ENCODE measurements at regions of chr11 and their contacts with region 1.

Region 1: GRCh38 chr11:1652771-1653540 is 23.4 kb downstream of the KRTAP5-5 start:
- DNase-seq: peak; percentile 44
- H3K4me3 ChIP-seq: no peak overlapping the region
- H3K27ac ChIP-seq: no peak overlapping the region
- H3K4me1 ChIP-seq: peaks cover 2% of the 10 kb centered on the region
- H3K27me3 ChIP-seq: peaks cover 0 to 4% of the 10 kb centered on the region in 2 experiments
- CTCF ChIP-seq: peak; percentile 93
- POLR2A ChIP-seq: no peak

Region 2: GRCh38 chr11:1572197-1573076 is 80.5 kb before region 1 on chr11 and contains the start of gene DUSP8:
- CTCF ChIA-PET with region 1: interaction called, 10 read pairs
- POLR2A ChIA-PET with region 1: no interaction called
- dilution Hi-C with region 1: no loop called
- intact Hi-C with region 1: no loop called
- DNase-seq: peak; percentile 80
- H3K4me3 ChIP-seq: peak within 1 kb of the TSS; percentile 29 to 43 (median 42)
- H3K27ac ChIP-seq: peak within 1 kb of the TSS; percentile 29
- H3K4me1 ChIP-seq: peaks cover 5% of the 10 kb centered on the region
- H3K27me3 ChIP-seq: peaks cover 10 to 16% of the 10 kb centered on the region in 2 experiments
- CTCF ChIP-seq: no peak
- POLR2A ChIP-seq: no peak
- total RNA-seq, gene DUSP8: 5.9 and 8.7 TPM in 2 replicates

Region 3: GRCh38 chr11:1640076-1640946 is 12.6 kb before region 1 on chr11:
- CTCF ChIA-PET with region 1: interaction called, 74 read pairs
- POLR2A ChIA-PET with region 1: no interaction called
- dilution Hi-C with region 1: no loop called
- intact Hi-C with region 1: no loop called
- DNase-seq: no peak
- H3K4me3 ChIP-seq: no peak overlapping the region
- H3K27ac ChIP-seq: no peak overlapping the region
- H3K4me1 ChIP-seq: peaks cover 11% of the 10 kb centered on the region
- H3K27me3 ChIP-seq: peaks cover 2 to 3% of the 10 kb centered on the region in 2 experiments
- CTCF ChIP-seq: peak; percentile 78 to 82
- POLR2A ChIP-seq: no peak

Region 4: GRCh38 chr11:1805525-1805924 is 152.6 kb after region 1 on chr11:
- CTCF ChIA-PET with region 1: interaction called, 14 read pairs
- POLR2A ChIA-PET with region 1: no interaction called
- dilution Hi-C with region 1: no loop called
- intact Hi-C with region 1: no loop called
- DNase-seq: no peak
- H3K4me3 ChIP-seq: no peak overlapping the region
- H3K27ac ChIP-seq: no peak overlapping the region
- H3K4me1 ChIP-seq: no peaks in the 10 kb centered on the region
- H3K27me3 ChIP-seq: peaks cover 0 to 1% of the 10 kb centered on the region in 2 experiments
- CTCF ChIP-seq: no peak
- POLR2A ChIP-seq: no peak

Region 5: GRCh38 chr11:1845561-1846452 is 192.9 kb after region 1 on chr11:
- CTCF ChIA-PET with region 1: interaction called, 14 read pairs
- POLR2A ChIA-PET with region 1: no interaction called
- dilution Hi-C with region 1: no loop called
- intact Hi-C with region 1: no loop called
- DNase-seq: no peak
- H3K4me3 ChIP-seq: no peak overlapping the region
- H3K27ac ChIP-seq: no peak overlapping the region
- H3K4me1 ChIP-seq: no peaks in the 10 kb centered on the region
- H3K27me3 ChIP-seq: no peaks in the 10 kb centered on the region
- CTCF ChIP-seq: no peak
- POLR2A ChIP-seq: no peak

Region 6: DNA sequence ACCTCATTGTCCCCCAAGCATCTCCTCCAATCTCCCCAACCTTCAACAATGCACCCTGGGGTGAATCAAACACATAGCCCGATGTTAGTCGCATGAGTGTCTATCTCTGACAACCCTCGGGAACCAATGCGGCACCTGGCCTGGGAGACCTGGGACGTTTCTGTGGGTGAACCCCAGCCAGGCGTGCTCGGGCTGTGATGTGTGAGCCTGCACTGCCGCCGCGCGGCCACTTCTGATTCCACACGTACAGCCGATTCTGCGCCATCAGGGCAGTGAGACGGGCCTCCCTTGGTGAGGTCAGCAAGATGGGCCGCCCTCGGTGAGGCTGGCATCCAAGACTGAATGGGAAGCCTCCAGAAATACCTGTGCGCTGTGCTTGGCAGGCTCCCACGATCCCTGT is 349.9 kb after region 1 on chr11:
- CTCF ChIA-PET with region 1: interaction called, 126 read pairs
- POLR2A ChIA-PET with region 1: no interaction called
- dilution Hi-C with region 1: no loop called
- intact Hi-C with region 1: no loop called
- DNase-seq: no peak
- H3K4me3 ChIP-seq: no peak overlapping the region
- H3K27ac ChIP-seq: no peak overlapping the region
- H3K4me1 ChIP-seq: no peaks in the 10 kb centered on the region
- H3K27me3 ChIP-seq: no peaks in the 10 kb centered on the region
- CTCF ChIP-seq: no peak
- POLR2A ChIP-seq: no peak